ENCODE measurements at regions of chr1 and their contacts with region 1.

Region 1: GRCh38 chr1:119743781-119744597 is 24.7 kb downstream of the HMGCS2 start:
- DNase-seq: peak; percentile 82
- H3K4me3 ChIP-seq: no peak overlapping the region
- H3K27ac ChIP-seq: no peak overlapping the region
- H3K4me1 ChIP-seq: peaks cover 0 to 9% of the 10 kb centered on the region in 2 experiments; a peak in 1 of 4 replicates
- H3K27me3 ChIP-seq: no peaks in the 10 kb centered on the region
- CTCF ChIP-seq: peak; percentile 83
- EP300 ChIP-seq: no peak
- RAD21 ChIP-seq: peak; percentile 78

Region 2: GRCh38 chr1:119647734-119648619 is 96.0 kb before region 1 on chr1 and contains the start of gene ZNF697:
- CTCF ChIA-PET with region 1: no interaction called
- POLR2A ChIA-PET with region 1: no interaction called
- DNase-seq: peak; percentile 96
- H3K4me3 ChIP-seq: peak within 1 kb of the TSS; percentile 97 to 98
- H3K27ac ChIP-seq: peak within 1 kb of the TSS; percentile 96
- H3K4me1 ChIP-seq: peaks cover 5 to 11% of the 10 kb centered on the region in 2 experiments; a peak in 3 of 4 replicates
- H3K27me3 ChIP-seq: no peaks in the 10 kb centered on the region
- CTCF ChIP-seq: peak; percentile 41; the same call in 1 of the 2 replicates
- EP300 ChIP-seq: no peak
- RAD21 ChIP-seq: peak; percentile 68; the same call in 1 of the 2 replicates
- polyA plus RNA-seq, gene ZNF697: 3.4 and 4.1 TPM in 2 replicates

Region 3: DNA sequence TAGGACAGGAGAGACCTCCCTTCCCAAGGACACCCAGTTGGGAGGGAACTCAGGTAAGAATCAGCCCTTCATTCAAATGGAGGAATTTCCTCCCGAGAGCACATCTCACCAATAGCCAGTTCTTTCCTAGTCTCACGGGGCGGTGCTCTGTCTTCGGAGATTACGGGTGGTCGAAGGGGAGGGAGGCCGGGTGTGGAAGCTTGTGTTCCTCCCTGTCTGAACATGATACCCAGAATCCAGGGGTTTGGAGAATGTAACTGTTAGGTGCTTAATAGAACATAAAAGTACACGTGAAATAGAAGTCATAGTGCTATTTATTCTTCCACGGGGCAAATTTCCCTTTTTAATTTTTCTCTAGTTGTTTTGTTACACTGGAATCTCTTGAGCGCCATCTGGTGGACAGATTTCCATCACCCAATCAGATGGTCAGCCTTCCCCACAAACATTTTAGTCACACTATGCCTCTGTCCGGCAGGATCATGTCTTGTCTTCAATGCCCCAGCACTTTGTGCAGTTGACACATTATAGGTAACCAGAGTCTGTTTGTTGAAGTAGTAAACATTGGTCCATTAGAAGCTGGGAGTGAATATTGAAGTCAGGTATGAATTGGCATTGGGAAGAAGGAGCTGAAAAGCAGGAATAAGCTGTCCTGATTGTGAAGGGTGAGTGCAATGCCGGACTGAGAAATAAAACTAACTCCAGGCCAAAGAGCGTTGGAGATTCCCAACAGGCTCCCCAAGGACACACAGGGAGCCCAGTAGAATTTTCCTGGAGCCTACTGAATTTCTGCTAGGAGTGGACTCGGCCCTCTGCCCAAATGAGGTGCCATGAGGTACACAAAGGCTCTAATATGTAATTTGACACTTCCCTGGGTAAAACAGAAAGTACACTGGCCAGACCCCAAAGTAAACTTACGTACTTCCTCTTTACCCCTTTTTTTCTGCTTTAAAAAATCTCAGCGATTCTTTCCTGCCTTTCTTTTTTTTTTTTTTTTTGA is 68.3 kb before region 1 on chr1:
- CTCF ChIA-PET with region 1: interaction called, 15 read pairs
- POLR2A ChIA-PET with region 1: no interaction called
- DNase-seq: peak; percentile 78
- H3K4me3 ChIP-seq: peak overlapping the region; percentile 49 to 50
- H3K27ac ChIP-seq: peak overlapping the region; percentile 54 to 97
- H3K4me1 ChIP-seq: peaks cover 3 to 20% of the 10 kb centered on the region in 2 experiments; a peak in 3 of 4 replicates
- H3K27me3 ChIP-seq: no peaks in the 10 kb centered on the region
- CTCF ChIP-seq: peak; percentile 90
- EP300 ChIP-seq: no peak
- RAD21 ChIP-seq: peak; percentile 67

Region 4: DNA sequence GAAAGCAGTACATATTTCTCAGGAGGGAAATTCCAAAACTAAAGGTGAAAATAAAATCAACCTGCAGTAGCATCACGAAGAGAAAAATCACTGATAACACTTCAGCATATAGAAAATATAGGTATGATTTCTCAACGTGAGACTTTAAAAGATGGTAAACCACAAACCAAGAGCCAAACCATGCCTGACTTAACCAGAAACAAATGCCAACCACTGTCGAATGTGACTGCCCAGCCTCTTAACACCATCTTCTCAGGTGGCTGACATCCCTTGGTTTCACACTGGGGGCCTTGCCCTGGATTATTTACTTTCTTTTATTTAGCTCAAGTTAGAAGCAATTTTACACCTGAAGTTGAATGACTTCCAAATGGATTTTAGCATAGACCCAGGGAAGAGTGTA is 14.6 kb after region 1 on chr1:
- CTCF ChIA-PET with region 1: interaction called, 70 read pairs
- POLR2A ChIA-PET with region 1: no interaction called
- DNase-seq: no peak
- H3K4me3 ChIP-seq: no peak overlapping the region
- H3K27ac ChIP-seq: no peak overlapping the region
- H3K4me1 ChIP-seq: no peaks in the 10 kb centered on the region
- H3K27me3 ChIP-seq: peaks cover 5% of the 10 kb centered on the region
- CTCF ChIP-seq: no peak
- EP300 ChIP-seq: no peak
- RAD21 ChIP-seq: no peak

Region 5: GRCh38 chr1:119771016-119771415 is 27.0 kb after region 1 on chr1:
- CTCF ChIA-PET with region 1: interaction called, 22 read pairs
- POLR2A ChIA-PET with region 1: no interaction called
- DNase-seq: peak; percentile 29
- H3K4me3 ChIP-seq: no peak overlapping the region
- H3K27ac ChIP-seq: no peak overlapping the region
- H3K4me1 ChIP-seq: peaks cover 5 to 18% of the 10 kb centered on the region in 2 experiments; a peak in 2 of 4 replicates
- H3K27me3 ChIP-seq: no peaks in the 10 kb centered on the region
- CTCF ChIP-seq: no peak
- EP300 ChIP-seq: no peak
- RAD21 ChIP-seq: no peak

Region 6: DNA sequence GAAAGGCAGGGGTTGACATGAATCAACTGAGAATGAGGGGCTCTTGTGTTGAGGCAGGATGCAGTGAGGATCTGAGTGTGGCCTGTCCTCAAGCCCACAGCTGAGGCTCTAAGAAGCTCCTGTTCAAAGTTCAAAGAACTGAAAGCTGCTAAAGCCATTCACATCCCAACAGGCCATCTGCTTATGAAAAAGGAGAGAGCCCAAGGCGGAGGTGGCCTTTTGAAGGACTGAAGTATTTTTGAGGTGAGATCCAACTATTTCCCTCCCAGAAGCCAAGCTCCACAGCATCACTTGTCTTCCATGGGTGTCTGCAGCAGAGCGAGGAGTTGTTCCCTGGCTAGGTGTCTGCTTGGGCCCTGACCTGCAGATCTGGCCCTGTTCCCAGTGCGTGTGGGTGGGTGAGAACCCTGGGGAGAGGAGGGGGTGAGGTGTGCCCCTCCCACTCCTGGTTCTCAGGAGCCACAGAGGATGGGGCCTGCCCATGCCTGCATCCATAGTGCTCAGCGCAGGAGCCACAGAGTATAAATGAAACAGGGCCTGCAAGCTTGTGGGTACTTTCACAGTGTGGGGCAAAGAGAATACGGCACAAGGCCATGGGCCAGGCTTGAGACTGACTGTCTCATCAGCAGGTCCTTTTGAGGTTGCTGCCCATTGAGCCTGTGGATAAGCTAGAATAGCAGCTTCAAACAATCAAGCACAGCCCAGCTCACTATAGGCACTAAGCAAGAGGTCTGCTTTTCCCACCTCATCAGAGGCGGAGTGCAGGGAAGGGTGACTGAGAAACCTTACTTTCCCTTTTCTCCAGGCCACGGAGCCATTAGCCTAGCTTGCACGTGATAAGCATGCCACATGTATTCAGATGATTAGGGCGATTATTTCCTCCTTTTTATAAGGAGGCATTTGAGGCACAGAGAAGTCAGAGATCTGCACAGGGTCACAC is 51.5 kb after region 1 on chr1:
- CTCF ChIA-PET with region 1: interaction called, 10 read pairs
- POLR2A ChIA-PET with region 1: no interaction called
- DNase-seq: no peak
- H3K4me3 ChIP-seq: no peak overlapping the region
- H3K27ac ChIP-seq: no peak overlapping the region
- H3K4me1 ChIP-seq: no peaks in the 10 kb centered on the region; a peak in 1 of 4 replicates
- H3K27me3 ChIP-seq: no peaks in the 10 kb centered on the region
- CTCF ChIP-seq: no peak
- EP300 ChIP-seq: no peak
- RAD21 ChIP-seq: no peak

Region 7: DNA sequence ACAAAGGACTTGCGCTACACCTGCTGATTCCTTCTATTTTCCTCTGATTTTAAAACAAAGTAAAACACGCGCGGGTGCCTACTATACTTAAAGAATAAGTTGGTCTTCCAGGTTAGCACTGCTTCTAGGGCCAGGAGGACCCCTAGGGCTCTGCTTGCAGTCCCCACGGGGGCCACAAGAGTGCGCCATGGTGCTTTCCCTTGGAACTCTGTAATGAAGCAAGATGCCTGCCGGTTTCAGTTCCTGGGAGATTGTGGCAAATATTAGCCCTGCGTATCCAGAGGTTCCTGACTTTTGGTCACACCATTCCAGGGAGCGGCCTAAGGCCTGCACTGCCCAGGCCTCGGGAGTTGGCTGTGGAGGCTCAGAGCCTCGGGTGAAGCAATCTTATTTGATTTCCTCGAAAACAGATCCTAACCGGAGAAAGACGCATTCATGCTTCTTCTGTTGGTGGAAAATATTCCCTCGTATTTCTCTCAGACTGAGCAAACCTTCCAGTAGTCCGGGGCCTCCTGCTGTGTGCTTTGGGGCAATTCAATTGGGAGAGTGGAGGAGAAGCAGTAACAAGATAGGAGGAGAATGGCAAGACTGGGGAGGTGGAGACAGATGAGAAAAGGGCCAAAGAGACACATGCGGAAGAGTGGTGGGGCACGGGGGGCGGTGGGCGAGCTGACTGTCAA is 127.1 kb after region 1 on chr1:
- CTCF ChIA-PET with region 1: interaction called, 14 read pairs
- POLR2A ChIA-PET with region 1: no interaction called
- DNase-seq: peak; percentile 70
- H3K4me3 ChIP-seq: no peak overlapping the region
- H3K27ac ChIP-seq: no peak overlapping the region
- H3K4me1 ChIP-seq: peaks cover 10 to 27% of the 10 kb centered on the region in 2 experiments; a peak in 2 of 4 replicates
- H3K27me3 ChIP-seq: no peaks in the 10 kb centered on the region
- CTCF ChIP-seq: peak; percentile 98
- EP300 ChIP-seq: no peak
- RAD21 ChIP-seq: peak; percentile 95

Measured in SK-N-SH (cell line).